B cell (primary cell): ENCODE measurements at regions of chr5 and their contacts with region 1.

Region 1: DNA sequence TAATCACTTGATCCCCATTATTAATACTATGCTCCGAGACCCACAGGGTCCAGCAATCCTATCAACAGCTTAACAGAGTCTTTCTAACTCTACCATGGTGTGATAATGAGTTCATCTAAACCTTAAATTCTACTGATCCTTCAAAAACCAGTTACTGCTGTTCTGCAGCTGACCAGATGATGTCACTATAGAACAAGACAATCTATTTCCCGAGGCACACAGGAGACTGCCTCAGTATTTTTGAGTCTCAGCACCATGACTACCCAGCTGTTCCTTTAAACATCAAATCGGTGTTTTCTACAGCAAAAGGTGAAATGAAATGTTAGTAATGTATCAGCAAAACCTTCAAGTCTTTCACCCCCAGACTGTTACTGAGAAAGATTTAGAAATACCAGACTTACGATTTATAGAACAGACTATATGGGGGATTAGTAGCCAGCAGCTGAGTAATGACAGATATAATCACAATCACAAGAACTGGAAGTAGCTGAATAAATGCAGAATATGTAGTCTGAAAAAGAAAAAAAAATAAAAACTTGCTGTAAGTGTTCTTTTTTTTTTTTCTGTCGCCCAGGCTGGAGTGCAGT is 16.9 kb downstream of the DNAJC18 start:
- DNase-seq: peak; percentile 80
- ATAC-seq: peak; percentile 95
- H3K4me3 ChIP-seq: no peak overlapping the region
- H3K4me3 Mint-ChIP-seq: no peak overlapping the region
- H3K27ac ChIP-seq: no peak overlapping the region
- H3K27ac Mint-ChIP-seq: peak overlapping the region; percentile 38
- H3K4me1 ChIP-seq: no peaks in the 10 kb centered on the region
- H3K4me1 Mint-ChIP-seq: peaks cover 2% of the 10 kb centered on the region
- H3K27me3 ChIP-seq: no peaks in the 10 kb centered on the region
- H3K27me3 Mint-ChIP-seq: no peaks in the 10 kb centered on the region
- CTCF ChIP-seq: peak; percentile 88

Region 2: DNA sequence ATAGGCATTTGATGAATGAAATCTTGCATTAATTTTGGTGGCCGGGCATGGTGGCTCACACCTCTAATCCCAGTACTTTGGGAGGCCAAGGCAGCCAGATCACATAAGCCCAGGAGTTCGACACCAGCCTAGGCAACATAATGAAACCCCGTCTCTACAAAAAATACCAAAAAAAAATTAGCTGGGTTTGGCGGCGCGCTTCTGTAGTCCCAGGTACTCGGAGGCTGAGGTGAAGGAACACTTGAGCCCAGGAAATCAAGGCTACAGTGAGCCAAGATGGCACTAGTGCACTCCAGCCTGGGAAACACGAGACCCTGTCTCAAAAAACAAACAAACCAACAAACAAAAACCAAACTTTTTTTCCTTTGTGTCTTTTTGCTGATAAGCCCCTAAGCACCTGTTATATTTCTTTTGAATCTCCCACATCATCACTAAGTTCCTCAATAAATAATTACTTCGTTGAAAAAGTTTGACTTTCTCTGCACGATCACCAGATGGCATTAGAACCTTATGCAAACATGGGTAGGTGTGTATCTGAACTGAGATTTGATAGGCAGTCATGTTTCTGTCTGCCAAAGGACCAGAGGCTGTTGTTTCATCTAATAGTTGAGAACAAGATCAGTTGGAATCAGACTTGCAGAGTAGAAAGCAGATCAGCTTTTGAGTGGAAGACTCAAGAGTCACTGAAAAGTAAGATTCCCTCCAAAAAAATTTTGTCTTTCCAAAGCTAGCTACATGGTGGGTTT is 134.3 kb before region 1 on chr5:
- CTCF ChIA-PET with region 1: interaction called, 10 read pairs
- POLR2A ChIA-PET with region 1: no interaction called
- intact Hi-C with region 1: no loop called
- DNase-seq: peak; percentile 41
- ATAC-seq: peak; percentile 73
- H3K4me3 ChIP-seq: no peak overlapping the region
- H3K4me3 Mint-ChIP-seq: no peak overlapping the region
- H3K27ac ChIP-seq: no peak overlapping the region
- H3K27ac Mint-ChIP-seq: peak overlapping the region; percentile 0
- H3K4me1 ChIP-seq: peaks cover 2 to 4% of the 10 kb centered on the region in 2 donors
- H3K4me1 Mint-ChIP-seq: peaks cover 2% of the 10 kb centered on the region
- H3K27me3 ChIP-seq: no peaks in the 10 kb centered on the region
- H3K27me3 Mint-ChIP-seq: no peaks in the 10 kb centered on the region
- CTCF ChIP-seq: peak; percentile 17

Region 3: GRCh38 chr5:139381837-139382361 is 40.5 kb before region 1 on chr5:
- CTCF ChIA-PET with region 1: no interaction called
- POLR2A ChIA-PET with region 1: no interaction called
- intact Hi-C with region 1: no loop called
- DNase-seq: peak; percentile 20
- ATAC-seq: no peak
- H3K4me3 ChIP-seq: no peak overlapping the region
- H3K4me3 Mint-ChIP-seq: no peak overlapping the region
- H3K27ac ChIP-seq: no peak overlapping the region
- H3K27ac Mint-ChIP-seq: peak overlapping the region; percentile 37
- H3K4me1 ChIP-seq: peaks cover 30 to 46% of the 10 kb centered on the region in 2 donors
- H3K4me1 Mint-ChIP-seq: peaks cover 49% of the 10 kb centered on the region
- H3K27me3 ChIP-seq: no peaks in the 10 kb centered on the region
- H3K27me3 Mint-ChIP-seq: no peaks in the 10 kb centered on the region
- CTCF ChIP-seq: no peak

Region 4: DNA sequence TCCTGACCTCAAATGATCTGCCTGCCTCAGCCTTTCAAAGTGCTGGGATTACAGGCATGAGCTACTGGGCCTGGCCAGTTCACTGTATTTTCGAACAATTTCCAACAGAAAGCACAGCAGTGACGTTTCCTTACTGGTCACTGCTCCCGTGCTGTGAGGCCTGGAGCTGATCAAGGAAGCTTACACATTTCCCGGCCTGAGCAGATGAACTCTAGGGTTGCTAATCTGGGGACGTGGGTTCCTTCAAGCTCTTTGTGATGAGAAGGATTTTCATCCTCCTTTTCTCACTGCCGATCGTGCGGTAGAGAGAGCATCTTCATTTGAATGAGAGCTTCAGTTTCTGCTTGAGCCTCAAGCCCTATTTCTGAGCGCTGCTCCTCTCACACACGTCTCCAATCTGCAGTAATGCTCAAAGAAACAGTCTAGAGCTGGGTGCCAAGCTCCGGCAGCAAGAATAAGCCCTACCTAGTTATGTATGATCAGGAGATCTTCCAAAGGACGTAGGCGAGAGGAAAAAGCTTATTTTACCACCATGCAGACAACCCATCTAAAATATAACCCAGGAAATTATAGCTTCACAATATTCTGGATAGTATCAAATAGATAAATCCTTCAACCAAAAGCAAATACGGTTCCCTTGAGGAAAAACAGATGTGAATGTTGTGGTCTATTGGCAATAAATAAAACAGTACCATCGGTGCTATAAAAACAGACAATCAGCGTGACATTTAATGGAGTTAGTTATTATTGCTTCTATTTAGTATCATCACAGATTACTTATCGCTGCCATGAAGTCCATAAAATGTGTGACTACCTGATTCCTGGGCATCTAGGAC is 11.2 kb before region 1 on chr5:
- CTCF ChIA-PET with region 1: interaction called, 43 read pairs
- POLR2A ChIA-PET with region 1: no interaction called
- intact Hi-C with region 1: no loop called
- DNase-seq: no peak
- ATAC-seq: no peak
- H3K4me3 ChIP-seq: no peak overlapping the region
- H3K4me3 Mint-ChIP-seq: no peak overlapping the region
- H3K27ac ChIP-seq: no peak overlapping the region
- H3K27ac Mint-ChIP-seq: no peak overlapping the region
- H3K4me1 ChIP-seq: peaks cover 22 to 23% of the 10 kb centered on the region in 2 donors
- H3K4me1 Mint-ChIP-seq: peaks cover 17% of the 10 kb centered on the region
- H3K27me3 ChIP-seq: no peaks in the 10 kb centered on the region
- H3K27me3 Mint-ChIP-seq: no peaks in the 10 kb centered on the region
- CTCF ChIP-seq: no peak

Region 5: GRCh38 chr5:139517683-139518564 is 95.5 kb after region 1 on chr5:
- CTCF ChIA-PET with region 1: interaction called, 168 read pairs
- POLR2A ChIA-PET with region 1: interaction called, 7 read pairs
- intact Hi-C with region 1: loop called (anchors 1 kb)
- DNase-seq: peak; percentile 92
- ATAC-seq: peak; percentile 96
- H3K4me3 ChIP-seq: peak overlapping the region; percentile 41 to 68 (median 61)
- H3K4me3 Mint-ChIP-seq: peak overlapping the region; percentile 87
- H3K27ac ChIP-seq: peak overlapping the region; percentile 71 to 79
- H3K27ac Mint-ChIP-seq: peak overlapping the region; percentile 86
- H3K4me1 ChIP-seq: peaks cover 2 to 20% of the 10 kb centered on the region in 2 donors
- H3K4me1 Mint-ChIP-seq: peaks cover 23% of the 10 kb centered on the region
- H3K27me3 ChIP-seq: no peaks in the 10 kb centered on the region
- H3K27me3 Mint-ChIP-seq: no peaks in the 10 kb centered on the region
- CTCF ChIP-seq: peak; percentile 92

Region 6: DNA sequence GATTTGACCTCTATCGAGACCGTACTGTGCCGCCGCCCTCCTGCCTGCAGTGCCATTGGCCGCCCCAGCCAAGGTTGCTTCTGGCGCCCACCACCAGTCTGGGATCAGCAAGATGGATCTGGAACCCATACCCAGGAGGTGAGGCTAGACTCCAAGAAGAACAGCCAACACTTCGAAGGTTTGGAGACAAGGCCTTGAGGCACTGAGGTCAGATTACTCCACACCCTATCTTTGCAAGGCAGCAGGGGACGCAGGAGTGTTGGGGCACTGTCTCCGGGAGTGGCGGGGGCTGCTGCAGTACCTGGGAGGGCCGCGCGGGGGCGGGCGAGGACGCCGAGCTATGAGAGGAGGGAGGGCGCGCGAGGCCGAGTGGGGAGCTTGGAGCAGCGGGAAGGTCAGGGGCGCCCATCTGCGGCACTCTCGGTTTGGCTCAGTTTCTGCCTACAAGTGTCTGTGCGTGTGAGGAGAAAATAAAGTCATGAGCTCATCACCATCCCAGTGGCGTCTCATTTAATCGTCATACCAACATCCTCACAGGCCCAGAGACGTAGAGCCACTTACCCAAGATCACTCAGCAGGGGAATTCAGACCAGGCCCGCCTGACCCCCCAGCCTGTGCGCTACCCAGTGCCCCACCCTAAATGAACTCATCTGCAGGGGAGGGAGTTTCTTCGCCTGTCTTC is 352.7 kb after region 1 on chr5:
- CTCF ChIA-PET with region 1: interaction called, 10 read pairs
- POLR2A ChIA-PET with region 1: no interaction called
- intact Hi-C with region 1: no loop called
- DNase-seq: peak; percentile 84
- ATAC-seq: peak; percentile 98
- H3K4me3 ChIP-seq: peak overlapping the region in 3 of 5 experiments; percentile 1 to 26 (median 6)
- H3K4me3 Mint-ChIP-seq: peak overlapping the region; percentile 64
- H3K27ac ChIP-seq: no peak overlapping the region
- H3K27ac Mint-ChIP-seq: peak overlapping the region; percentile 41
- H3K4me1 ChIP-seq: peaks cover 7 to 13% of the 10 kb centered on the region in 2 donors
- H3K4me1 Mint-ChIP-seq: peaks cover 15% of the 10 kb centered on the region
- H3K27me3 ChIP-seq: peaks cover 0 to 5% (median 0%) of the 10 kb centered on the region in 4 experiments
- H3K27me3 Mint-ChIP-seq: peaks cover 14% of the 10 kb centered on the region
- CTCF ChIP-seq: peak; percentile 94

Region 7: DNA sequence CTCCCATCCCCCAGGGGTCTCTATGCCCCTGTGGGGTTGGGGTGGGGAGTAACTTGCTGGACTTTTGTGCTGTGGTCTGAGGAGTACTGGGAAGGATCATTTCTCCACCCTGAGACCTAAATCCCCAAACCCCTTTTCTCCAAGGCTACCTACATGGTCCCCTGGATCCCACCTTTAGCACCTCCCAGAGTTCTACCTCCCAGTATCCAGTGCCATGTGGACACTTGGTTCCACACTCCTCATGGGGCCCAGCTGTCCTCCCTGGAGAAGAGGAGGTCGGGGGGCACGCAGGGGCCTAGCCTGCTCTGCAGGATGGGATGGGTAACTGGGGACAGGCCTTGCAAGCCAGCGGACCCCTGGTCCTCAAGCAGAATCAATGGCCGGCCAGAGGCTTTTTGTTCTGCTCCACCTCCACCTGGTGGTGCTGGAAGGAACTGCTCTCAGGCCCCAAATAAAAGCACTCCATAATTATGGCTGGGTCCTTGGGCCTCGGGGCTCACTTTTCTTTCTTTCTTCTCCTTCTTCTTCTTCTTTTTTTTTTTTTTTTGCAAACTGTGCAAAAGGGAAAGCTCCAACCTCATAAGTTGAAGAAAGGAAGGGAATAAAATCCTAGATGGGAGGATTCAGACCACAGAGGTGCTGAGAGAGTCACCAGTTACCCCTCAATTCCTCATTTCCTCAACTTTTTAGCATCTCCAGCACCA is 441.6 kb after region 1 on chr5:
- CTCF ChIA-PET with region 1: no interaction called
- POLR2A ChIA-PET with region 1: no interaction called
- intact Hi-C with region 1: loop called (anchors 1 kb)
- DNase-seq: peak; percentile 73
- ATAC-seq: peak; percentile 85
- H3K4me3 ChIP-seq: no peak overlapping the region
- H3K4me3 Mint-ChIP-seq: no peak overlapping the region
- H3K27ac ChIP-seq: no peak overlapping the region
- H3K27ac Mint-ChIP-seq: no peak overlapping the region
- H3K4me1 ChIP-seq: peaks cover 0 to 3% of the 10 kb centered on the region in 2 donors
- H3K4me1 Mint-ChIP-seq: peaks cover 7% of the 10 kb centered on the region
- H3K27me3 ChIP-seq: peaks cover 0 to 6% (median 1%) of the 10 kb centered on the region in 4 experiments
- H3K27me3 Mint-ChIP-seq: peaks cover 23% of the 10 kb centered on the region
- CTCF ChIP-seq: peak; percentile 92

Region 8: DNA sequence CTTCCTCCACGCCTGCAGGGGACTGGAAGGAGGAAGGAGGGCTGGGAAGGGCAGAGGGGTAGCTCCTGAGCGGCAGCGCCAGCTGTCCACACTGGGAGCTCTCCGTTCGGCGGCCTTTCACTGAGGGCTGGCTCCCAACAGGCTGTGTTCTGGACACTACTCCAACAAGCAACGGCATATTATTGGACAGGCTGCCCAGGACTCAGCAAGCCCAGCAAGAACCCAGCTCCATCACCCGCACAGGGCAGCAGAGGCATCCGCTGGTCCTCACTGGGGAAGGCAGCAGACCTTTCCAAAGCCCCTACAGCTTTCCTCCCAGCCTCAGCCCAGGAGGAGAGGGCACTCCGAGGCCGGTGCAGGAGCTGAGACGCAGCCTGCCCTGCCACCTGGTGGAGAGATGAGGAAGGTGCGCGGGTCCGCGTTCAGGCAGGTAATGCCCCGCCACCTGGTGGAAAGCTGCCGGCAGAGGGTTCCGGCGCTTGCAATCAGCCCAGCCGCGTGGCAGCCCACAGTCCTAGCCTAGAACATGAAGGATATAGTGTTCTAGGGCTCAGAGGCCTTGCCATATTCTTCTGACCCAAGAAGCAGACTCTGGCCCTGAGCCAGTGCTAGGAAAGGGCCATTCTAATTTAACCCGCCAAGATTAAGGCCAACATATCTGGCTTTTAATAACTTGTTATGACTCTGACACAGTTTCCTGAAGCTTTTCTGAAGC is 546.3 kb after region 1 on chr5:
- CTCF ChIA-PET with region 1: interaction called, 37 read pairs
- POLR2A ChIA-PET with region 1: no interaction called
- intact Hi-C with region 1: loop called (anchors 1 kb)
- DNase-seq: peak; percentile 89
- ATAC-seq: peak; percentile 99
- H3K4me3 ChIP-seq: no peak overlapping the region
- H3K4me3 Mint-ChIP-seq: no peak overlapping the region
- H3K27ac ChIP-seq: no peak overlapping the region
- H3K27ac Mint-ChIP-seq: no peak overlapping the region
- H3K4me1 ChIP-seq: no peaks in the 10 kb centered on the region
- H3K4me1 Mint-ChIP-seq: no peaks in the 10 kb centered on the region
- H3K27me3 ChIP-seq: peaks cover 0 to 25% (median 8%) of the 10 kb centered on the region in 4 experiments
- H3K27me3 Mint-ChIP-seq: peaks cover 44% of the 10 kb centered on the region
- CTCF ChIP-seq: peak; percentile 100